ENCODE measurements at regions of chr3 and their contacts with region 1.

Region 1: DNA sequence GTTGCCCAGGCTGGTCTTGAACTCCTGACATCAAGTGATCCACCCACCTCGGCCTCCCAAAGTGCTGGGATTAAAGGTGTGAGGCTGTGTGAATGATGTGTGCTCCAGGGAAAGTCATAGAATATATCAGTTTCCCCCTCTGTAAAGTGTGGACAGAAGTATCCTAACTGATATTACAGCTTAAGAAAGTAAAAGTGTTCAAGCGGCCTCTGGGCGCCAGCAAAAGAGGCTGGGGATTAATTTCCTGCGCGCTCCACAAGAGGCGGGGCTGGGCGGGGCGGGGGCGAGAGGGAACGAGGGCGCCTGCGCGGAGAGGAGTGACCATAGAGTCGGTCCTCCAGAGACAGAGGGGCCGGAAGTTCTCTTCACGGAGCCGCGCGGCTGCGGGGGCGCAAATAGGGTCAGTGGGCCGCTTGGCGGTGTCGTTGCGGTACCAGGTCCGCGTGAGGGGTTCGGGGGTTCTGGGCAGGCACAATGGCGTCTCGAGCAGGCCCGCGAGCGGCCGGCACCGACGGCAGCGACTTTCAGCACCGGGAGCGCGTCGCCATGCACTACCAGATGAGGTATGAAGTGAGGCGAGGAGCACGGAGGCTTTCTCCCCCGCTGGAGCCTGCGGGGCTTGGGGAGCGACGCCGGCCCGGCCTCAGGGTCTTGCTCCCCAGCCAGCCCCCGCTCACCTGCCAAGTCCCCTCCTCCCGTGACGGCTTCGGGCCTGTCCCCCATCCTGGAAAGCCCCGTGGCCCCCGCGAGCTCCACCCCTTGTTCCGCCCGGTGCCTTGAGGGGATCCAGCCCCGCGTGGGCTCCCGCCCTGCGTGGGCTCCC is at the start of gene JAGN1:
- DNase-seq: peak; percentile 96
- ATAC-seq: peak; percentile 82
- H3K4me3 Mint-ChIP-seq: peak within 1 kb of the TSS; percentile 96
- H3K27ac Mint-ChIP-seq: peak within 1 kb of the TSS; percentile 98
- H3K4me1 Mint-ChIP-seq: peaks cover 34% of the 10 kb centered on the region
- H3K27me3 Mint-ChIP-seq: no peaks in the 10 kb centered on the region
- total RNA-seq, gene JAGN1: 27.1 to 33.0 TPM

Region 2: DNA sequence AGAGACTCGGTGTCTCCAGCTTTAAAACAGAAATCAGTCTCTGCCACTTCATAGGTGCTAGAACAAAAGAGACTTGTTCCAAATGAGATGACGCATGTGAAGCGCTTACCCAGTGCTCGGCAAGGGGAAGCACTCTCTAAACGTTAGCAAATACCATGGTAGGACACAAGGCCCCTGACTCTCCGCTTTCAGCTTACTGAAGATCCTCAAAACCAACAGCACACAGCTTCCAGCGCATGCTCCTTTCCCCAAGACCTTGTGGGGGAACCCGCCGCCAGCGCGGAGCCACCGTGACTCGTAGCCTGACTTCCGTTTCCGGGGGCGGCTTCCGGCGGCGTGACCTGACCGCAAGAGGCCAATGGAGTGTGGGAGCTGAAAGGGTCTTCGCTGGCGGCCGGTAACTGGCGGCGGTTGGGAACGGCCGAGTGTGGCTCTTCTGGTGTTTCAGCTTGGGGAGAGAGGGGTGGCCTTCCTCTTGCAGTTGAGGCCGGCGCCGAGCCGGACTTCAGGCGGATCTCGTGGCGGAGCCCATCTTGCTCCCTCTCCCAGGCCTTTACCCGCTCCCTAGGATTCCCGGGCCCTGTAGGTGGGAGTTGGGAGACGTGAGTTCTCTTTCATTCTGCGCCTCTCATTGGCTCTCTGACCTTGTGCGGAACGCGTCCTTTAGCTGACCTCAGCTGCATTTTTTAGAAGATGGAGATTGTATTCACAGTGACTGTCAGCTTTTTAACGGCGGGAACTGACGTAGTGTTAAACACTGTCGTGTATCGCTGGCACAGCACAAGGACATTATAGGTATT is 527.5 kb before region 1 on chr3 and contains the start of gene THUMPD3:
- CTCF ChIA-PET with region 1: no interaction called
- POLR2A ChIA-PET with region 1: no interaction called
- intact Hi-C with region 1: loop called in 1 of 2 experiments (anchors 2 kb)
- DNase-seq: peak; percentile 96
- ATAC-seq: peak; percentile 93
- H3K4me3 Mint-ChIP-seq: peak within 1 kb of the TSS; percentile 98
- H3K27ac Mint-ChIP-seq: peak within 1 kb of the TSS; percentile 100
- H3K4me1 Mint-ChIP-seq: peaks cover 21% of the 10 kb centered on the region
- H3K27me3 Mint-ChIP-seq: no peaks in the 10 kb centered on the region
- total RNA-seq, gene THUMPD3: 59.6 to 74.3 TPM

Region 3: DNA sequence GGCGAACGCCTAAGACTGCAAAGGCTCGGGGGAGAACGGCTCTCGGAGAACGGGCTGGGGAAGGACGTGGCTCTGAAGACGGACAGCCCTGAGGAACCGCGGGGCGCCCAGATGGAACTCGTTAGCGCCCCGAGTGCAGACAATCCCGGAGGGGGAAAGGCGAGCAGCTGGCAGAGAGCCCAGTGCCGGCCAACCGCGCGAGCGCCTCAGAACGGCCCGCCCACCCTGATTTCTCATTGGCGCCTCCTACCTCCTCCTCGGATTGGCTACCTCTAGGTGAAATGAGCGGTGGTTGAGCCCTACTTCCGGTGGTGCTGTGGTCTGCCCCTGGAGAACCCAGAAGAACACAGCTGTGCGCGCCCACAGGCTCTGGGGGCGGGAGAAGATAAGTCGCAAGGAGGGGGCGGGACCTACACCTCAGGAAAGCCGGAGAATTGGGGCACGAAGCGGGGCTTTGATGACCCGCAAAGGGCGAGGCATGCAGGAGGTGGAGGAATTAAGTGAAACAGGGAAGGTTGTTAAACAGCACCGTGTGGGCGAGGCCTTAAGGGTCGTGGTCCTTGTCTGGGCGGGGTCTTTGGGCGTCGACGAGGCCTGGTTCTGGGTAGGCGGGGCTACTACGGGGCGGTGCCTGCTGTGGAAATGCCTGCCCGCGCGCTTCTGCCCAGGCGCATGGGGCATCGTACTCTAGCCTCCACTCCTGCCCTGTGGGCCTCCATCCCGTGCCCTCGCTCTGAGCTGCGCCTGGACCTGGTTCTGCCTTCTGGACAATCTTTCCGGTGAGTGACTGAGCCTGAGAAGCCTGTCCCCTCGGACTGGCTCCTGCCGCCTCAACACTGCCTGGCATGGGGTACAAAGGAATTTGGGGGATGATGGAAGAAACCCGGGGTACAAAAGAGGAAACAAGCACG is 140.6 kb before region 1 on chr3 and contains the start of gene OGG1:
- CTCF ChIA-PET with region 1: no interaction called
- POLR2A ChIA-PET with region 1: interaction called, 3 read pairs
- intact Hi-C with region 1: loop called in 1 of 2 experiments (anchors 1 kb)
- DNase-seq: peak; percentile 98
- ATAC-seq: peak; percentile 94
- H3K4me3 Mint-ChIP-seq: peak within 1 kb of the TSS; percentile 87
- H3K27ac Mint-ChIP-seq: peak within 1 kb of the TSS; percentile 91
- H3K4me1 Mint-ChIP-seq: peaks cover 46% of the 10 kb centered on the region
- H3K27me3 Mint-ChIP-seq: no peaks in the 10 kb centered on the region
- total RNA-seq, gene OGG1: 36.4 to 61.6 TPM

Region 4: GRCh38 chr3:9843715-9844438 is 46.6 kb before region 1 on chr3 and contains the start of gene RPUSD3:
- CTCF ChIA-PET with region 1: interaction called, 4 read pairs
- POLR2A ChIA-PET with region 1: no interaction called
- intact Hi-C with region 1: loop called (anchors 1 to 5 kb)
- DNase-seq: peak; percentile 98
- ATAC-seq: peak; percentile 97
- H3K4me3 Mint-ChIP-seq: peak within 1 kb of the TSS; percentile 99
- H3K27ac Mint-ChIP-seq: peak within 1 kb of the TSS; percentile 96
- H3K4me1 Mint-ChIP-seq: peaks cover 28% of the 10 kb centered on the region
- H3K27me3 Mint-ChIP-seq: no peaks in the 10 kb centered on the region
- total RNA-seq, gene RPUSD3: 79.2 to 81.5 TPM

Region 5: GRCh38 chr3:10108091-10108490 is 217.6 kb after region 1 on chr3 and contains the start of gene FANCD2OS:
- CTCF ChIA-PET with region 1: no interaction called
- POLR2A ChIA-PET with region 1: interaction called, 12 read pairs
- intact Hi-C with region 1: no loop called
- DNase-seq: no peak
- ATAC-seq: no peak
- H3K4me3 Mint-ChIP-seq: no peak within 1 kb of the TSS
- H3K27ac Mint-ChIP-seq: no peak within 1 kb of the TSS
- H3K4me1 Mint-ChIP-seq: no peaks in the 10 kb centered on the region
- H3K27me3 Mint-ChIP-seq: no peaks in the 10 kb centered on the region
- total RNA-seq, gene FANCD2OS: not detected

Region 6: DNA sequence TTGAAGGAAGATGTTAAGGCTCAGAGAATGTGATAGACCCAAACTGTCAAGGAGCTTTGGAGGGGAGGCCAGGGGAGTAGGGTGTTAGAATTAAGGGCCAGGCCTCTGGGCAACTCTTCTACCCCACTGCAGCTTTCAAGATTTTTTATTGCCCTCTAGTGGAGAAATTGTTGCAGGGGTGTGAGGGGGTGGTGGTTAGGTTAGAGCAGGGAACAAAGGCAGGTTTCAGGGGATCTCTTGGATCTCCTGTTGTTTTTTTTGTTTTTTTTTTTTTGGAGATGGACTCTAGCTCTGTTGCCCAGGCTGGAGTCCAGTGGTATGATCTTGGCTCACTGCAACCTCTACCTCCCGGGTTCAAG is 431.9 kb after region 1 on chr3:
- CTCF ChIA-PET with region 1: no interaction called
- POLR2A ChIA-PET with region 1: no interaction called
- intact Hi-C with region 1: loop called in 1 of 2 experiments (anchors 1 kb)
- DNase-seq: peak; percentile 37
- ATAC-seq: peak; percentile 22
- H3K4me3 Mint-ChIP-seq: no peak overlapping the region
- H3K27ac Mint-ChIP-seq: peak overlapping the region; percentile 3
- H3K4me1 Mint-ChIP-seq: peaks cover 23% of the 10 kb centered on the region
- H3K27me3 Mint-ChIP-seq: peaks cover 4% of the 10 kb centered on the region